ENCODE measurements at regions of chr5 and their contacts with region 1.

Region 1: GRCh38 chr5:65481635-65482295 is at the start of gene ADAMTS6:
- DNase-seq: peak; percentile 94
- H3K4me3 ChIP-seq: peak within 1 kb of the TSS; percentile 57
- H3K27ac ChIP-seq: peak within 1 kb of the TSS; percentile 71
- H3K4me1 ChIP-seq: peaks cover 9% of the 10 kb centered on the region
- H3K27me3 ChIP-seq: no peaks in the 10 kb centered on the region
- CTCF ChIP-seq: no peak
- total RNA-seq, gene ADAMTS6: 2.6 and 2.8 TPM in 2 replicates

Region 2: GRCh38 chr5:64811050-64811640 is 670.6 kb before region 1 on chr5:
- CTCF ChIA-PET with region 1: interaction called, 28 read pairs
- POLR2A ChIA-PET with region 1: no interaction called
- intact Hi-C with region 1: loop called (anchors 1 kb)
- DNase-seq: peak; percentile 69
- H3K4me3 ChIP-seq: no peak overlapping the region
- H3K27ac ChIP-seq: no peak overlapping the region
- H3K4me1 ChIP-seq: no peaks in the 10 kb centered on the region
- H3K27me3 ChIP-seq: no peaks in the 10 kb centered on the region
- CTCF ChIP-seq: peak; percentile 75

Region 3: DNA sequence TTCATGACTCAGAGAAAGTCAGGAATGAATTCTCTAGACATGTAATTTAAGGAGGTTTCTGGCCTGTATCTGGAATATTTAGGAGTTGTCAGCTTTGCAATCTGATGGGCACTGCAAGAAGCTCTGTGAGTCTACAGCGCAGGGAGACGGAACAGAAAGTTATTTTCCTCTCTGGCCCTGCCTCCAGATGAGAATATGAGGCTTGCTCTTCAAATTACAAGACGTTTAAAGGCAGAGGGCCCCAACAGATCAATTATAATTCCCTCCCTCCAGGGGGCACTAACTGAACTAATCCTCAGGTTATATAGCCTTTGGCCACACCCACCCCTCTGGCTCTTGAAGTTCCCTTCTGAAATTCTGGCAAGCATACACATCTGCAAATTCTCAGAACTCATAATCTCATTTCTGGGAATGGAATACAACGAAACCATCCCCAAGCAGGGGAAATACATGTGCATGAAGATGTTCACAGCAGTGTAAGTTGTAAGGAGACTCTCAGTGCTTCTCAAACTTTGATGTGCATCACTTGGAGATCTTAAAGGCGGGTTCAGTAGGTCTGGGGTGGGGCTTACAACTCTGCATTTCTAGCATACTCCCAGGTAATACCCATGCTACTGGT is 405.4 kb before region 1 on chr5:
- CTCF ChIA-PET with region 1: interaction called, 3 read pairs
- POLR2A ChIA-PET with region 1: no interaction called
- intact Hi-C with region 1: loop called (anchors 5 kb)
- DNase-seq: peak; percentile 95
- H3K4me3 ChIP-seq: no peak overlapping the region
- H3K27ac ChIP-seq: peak overlapping the region; percentile 87
- H3K4me1 ChIP-seq: peaks cover 53% of the 10 kb centered on the region
- H3K27me3 ChIP-seq: no peaks in the 10 kb centered on the region
- CTCF ChIP-seq: peak; percentile 55

Region 4: DNA sequence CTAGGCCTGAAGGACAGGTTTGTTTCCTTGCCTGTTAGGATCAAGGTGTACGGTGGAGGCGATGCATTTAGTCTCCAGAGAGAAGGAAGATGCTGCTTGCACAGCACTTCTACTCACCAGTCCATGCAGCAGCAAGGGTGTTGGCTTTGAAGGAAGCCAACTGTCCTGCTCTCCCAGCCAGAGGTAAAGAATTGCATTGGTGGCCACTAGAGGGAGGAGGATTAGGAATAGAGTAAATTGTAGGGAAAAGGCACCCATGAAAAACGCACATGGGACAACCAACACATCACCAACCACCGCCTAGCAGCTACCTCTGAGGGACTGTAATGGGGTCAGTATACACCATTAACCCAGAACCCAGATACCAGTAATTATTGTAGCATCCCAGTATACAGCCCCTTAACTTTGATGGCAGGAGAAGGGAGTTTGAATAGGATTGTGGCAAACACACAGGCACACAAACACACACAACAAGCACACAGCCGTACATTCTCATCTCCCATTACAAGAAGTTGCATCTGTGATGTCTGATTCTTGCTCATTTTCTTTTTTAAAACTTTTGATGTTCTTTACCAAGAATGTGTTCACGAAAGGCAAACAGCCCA is 267.7 kb before region 1 on chr5:
- CTCF ChIA-PET with region 1: no interaction called
- POLR2A ChIA-PET with region 1: no interaction called
- intact Hi-C with region 1: loop called (anchors 2 kb)
- DNase-seq: peak; percentile 59
- H3K4me3 ChIP-seq: no peak overlapping the region
- H3K27ac ChIP-seq: no peak overlapping the region
- H3K4me1 ChIP-seq: no peaks in the 10 kb centered on the region
- H3K27me3 ChIP-seq: no peaks in the 10 kb centered on the region
- CTCF ChIP-seq: peak; percentile 73

Region 5: DNA sequence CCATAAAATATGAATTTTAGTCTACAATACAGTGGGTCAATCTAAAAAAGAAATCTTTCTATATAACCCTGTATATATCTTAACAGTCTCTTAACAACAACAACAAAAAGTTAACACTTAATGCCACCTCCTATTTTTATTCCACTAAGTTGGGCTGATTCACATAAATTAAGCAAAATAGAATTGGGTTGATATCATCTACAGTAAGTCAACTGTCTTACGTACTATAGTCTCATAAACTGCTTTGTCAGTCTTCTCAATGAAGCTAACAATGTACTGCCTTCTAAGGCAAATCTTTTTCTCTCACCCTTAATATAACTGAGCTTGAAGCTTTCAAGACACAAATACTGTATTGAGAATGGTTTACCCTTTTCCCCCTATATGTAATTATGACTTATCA is 185.7 kb before region 1 on chr5:
- CTCF ChIA-PET with region 1: no interaction called
- POLR2A ChIA-PET with region 1: no interaction called
- intact Hi-C with region 1: no loop called
- DNase-seq: no peak
- H3K4me3 ChIP-seq: no peak overlapping the region
- H3K27ac ChIP-seq: no peak overlapping the region
- H3K4me1 ChIP-seq: no peaks in the 10 kb centered on the region
- H3K27me3 ChIP-seq: no peaks in the 10 kb centered on the region
- CTCF ChIP-seq: no peak

Region 6: GRCh38 chr5:65530904-65531303 is 49.1 kb after region 1 on chr5:
- CTCF ChIA-PET with region 1: no interaction called
- POLR2A ChIA-PET with region 1: no interaction called
- intact Hi-C with region 1: no loop called
- DNase-seq: no peak
- H3K4me3 ChIP-seq: no peak overlapping the region
- H3K27ac ChIP-seq: no peak overlapping the region
- H3K4me1 ChIP-seq: no peaks in the 10 kb centered on the region
- H3K27me3 ChIP-seq: no peaks in the 10 kb centered on the region
- CTCF ChIP-seq: no peak

Region 7: DNA sequence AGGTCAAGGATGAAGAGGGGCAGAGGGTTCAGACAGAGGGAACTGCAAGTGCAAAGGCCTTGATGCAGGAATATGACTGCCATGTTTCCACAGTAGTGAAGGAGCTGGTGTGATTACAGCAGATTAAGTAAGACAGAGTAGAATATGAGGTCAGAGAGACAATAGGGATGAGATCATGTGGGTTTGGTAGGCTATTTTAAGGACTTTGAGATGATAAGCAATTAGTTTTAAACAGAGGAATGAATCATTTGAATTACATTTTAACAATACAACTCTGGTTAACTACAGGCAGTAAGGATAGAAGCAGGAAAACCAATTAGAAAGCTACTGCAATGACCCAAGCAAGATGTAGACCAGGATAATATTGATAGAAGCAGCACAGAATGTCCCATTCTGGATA is 73.5 kb after region 1 on chr5:
- CTCF ChIA-PET with region 1: no interaction called
- POLR2A ChIA-PET with region 1: interaction called, 12 read pairs
- intact Hi-C with region 1: no loop called
- DNase-seq: no peak
- H3K4me3 ChIP-seq: no peak overlapping the region
- H3K27ac ChIP-seq: no peak overlapping the region
- H3K4me1 ChIP-seq: no peaks in the 10 kb centered on the region
- H3K27me3 ChIP-seq: no peaks in the 10 kb centered on the region
- CTCF ChIP-seq: no peak

Measured in A673 (cell line).